Aorta (tissue), 5 donors: ENCODE measurements at regions of chr1 and their contacts with region 1.

Region 1: GRCh38 chr1:108512239-108512981 is 47.5 kb upstream of the EEIG2 start:
- DNase-seq: no peak
- ATAC-seq: no peak
- H3K4me3 ChIP-seq: no peak overlapping the region
- H3K27ac ChIP-seq: no peak overlapping the region
- H3K4me1 ChIP-seq: no peaks in the 10 kb centered on the region
- H3K27me3 ChIP-seq: peaks cover 0 to 3% of the 10 kb centered on the region in 2 donors

Region 2: DNA sequence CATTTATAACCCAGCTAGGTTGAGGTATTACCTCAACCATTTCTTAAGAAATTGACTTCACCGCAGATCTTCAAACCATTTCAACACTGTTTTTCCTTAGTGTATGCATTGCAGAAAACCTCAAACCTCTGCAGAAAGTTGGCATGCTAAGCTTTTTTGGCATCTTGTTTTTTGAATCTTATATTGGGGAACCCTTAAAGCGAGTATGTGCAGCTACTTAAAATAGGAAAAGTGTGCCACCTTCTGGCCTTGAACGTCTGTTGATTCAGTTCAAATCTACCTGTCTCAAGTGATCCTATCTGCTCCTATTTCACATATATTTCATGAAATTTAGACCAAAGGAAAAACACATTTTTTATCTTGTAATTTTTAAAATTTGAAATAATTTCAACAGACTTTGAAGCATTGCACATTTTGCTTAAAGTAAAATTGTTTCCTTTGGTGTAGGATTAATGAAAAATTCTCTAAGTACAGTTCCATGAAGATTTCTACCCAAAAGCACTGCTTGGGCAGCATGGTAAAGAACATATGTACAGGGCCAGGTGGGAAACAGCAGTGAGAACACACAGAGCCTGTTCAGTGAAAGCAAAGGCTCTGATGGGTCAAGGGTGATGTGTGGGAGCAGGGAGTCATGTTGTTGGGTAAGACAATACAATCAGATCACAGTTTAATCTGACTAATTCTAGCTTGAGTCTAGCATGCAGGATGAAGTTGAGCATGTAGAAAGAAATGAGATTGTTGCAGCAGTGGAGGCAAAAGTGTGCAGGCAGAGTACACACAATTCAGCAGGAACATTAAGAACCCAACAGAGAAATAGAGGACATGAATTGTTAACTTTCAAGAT is 131.3 kb after region 1 on chr1:
- intact Hi-C with region 1: loop called (anchors 1 to 2 kb)
- DNase-seq: no peak
- ATAC-seq: peak; percentile 77
- H3K4me3 ChIP-seq: no peak overlapping the region
- H3K27ac ChIP-seq: no peak overlapping the region
- H3K4me1 ChIP-seq: no peaks in the 10 kb centered on the region
- H3K27me3 ChIP-seq: no peaks in the 10 kb centered on the region